A549 (cell line): ENCODE measurements at regions of chr10 and their contacts with region 1.

Region 1: DNA sequence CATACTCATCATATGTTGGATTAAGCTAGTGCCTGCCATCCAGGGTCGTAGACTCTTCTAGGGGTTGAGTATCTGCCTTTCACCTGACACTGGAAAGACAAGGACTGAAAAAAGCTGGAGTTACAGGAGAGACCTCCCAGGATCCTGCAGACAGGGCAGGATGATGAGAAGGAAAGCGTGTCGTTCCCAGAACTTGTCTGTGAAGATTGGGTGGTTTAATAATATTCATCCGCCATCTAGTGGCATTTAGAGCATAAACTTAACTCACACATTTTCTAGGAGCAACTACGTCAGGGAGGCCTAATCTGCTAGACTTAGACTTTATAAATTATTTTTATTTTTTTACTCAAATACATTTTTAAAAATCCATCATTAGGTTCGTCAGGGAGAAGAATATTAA is 59.6 kb downstream of the ADRB1 start:
- DNase-seq: peak; percentile 74
- ATAC-seq: peak; percentile 94 to 95
- H3K4me3 ChIP-seq: no peak overlapping the region
- H3K27ac ChIP-seq: no peak overlapping the region; a peak in 1 of 6 replicates
- H3K4me1 ChIP-seq: 0 out of 3 replicates have a peak, but pooled peaks cover 3% of the 10 kb centered on the region
- CTCF ChIP-seq: peak; percentile 87
- EP300 ChIP-seq: no peak
- POLR2A ChIP-seq: no peak
- RAD21 ChIP-seq: peak; percentile 91 to 94

Region 2: GRCh38 chr10:113121153-113121552 is 982.1 kb before region 1 on chr10:
- CTCF ChIA-PET with region 1: no interaction called
- POLR2A ChIA-PET with region 1: no interaction called
- DNase-seq: no peak
- ATAC-seq: no peak
- H3K4me3 ChIP-seq: no peak overlapping the region
- H3K27ac ChIP-seq: no peak overlapping the region
- H3K4me1 ChIP-seq: peaks cover 18% of the 10 kb centered on the region
- CTCF ChIP-seq: no peak
- EP300 ChIP-seq: no peak
- POLR2A ChIP-seq: no peak
- RAD21 ChIP-seq: no peak

Region 3: GRCh38 chr10:113704637-113705343 is 398.5 kb before region 1 on chr10:
- CTCF ChIA-PET with region 1: interaction called, 59 read pairs
- POLR2A ChIA-PET with region 1: no interaction called
- DNase-seq: peak; percentile 20 to 49
- ATAC-seq: peak; percentile 61 to 89; a peak in 4 of 6 replicates
- H3K4me3 ChIP-seq: no peak overlapping the region
- H3K27ac ChIP-seq: no peak overlapping the region
- H3K4me1 ChIP-seq: peaks cover 25% of the 10 kb centered on the region
- CTCF ChIP-seq: peak; percentile 87
- EP300 ChIP-seq: no peak
- POLR2A ChIP-seq: no peak
- RAD21 ChIP-seq: peak; percentile 80 to 82

Region 4: GRCh38 chr10:113788604-113789083 is 314.6 kb before region 1 on chr10:
- CTCF ChIA-PET with region 1: interaction called, 11 read pairs
- POLR2A ChIA-PET with region 1: no interaction called
- DNase-seq: peak; percentile 44 to 80
- ATAC-seq: peak; percentile 63 to 85
- H3K4me3 ChIP-seq: no peak overlapping the region
- H3K27ac ChIP-seq: peak overlapping the region; percentile 83 to 89
- H3K4me1 ChIP-seq: peaks cover 22% of the 10 kb centered on the region
- CTCF ChIP-seq: no peak
- EP300 ChIP-seq: peak in 1 of 2 experiments; percentile 35; a peak in 1 of 5 replicates
- POLR2A ChIP-seq: no peak
- RAD21 ChIP-seq: no peak

Region 5: DNA sequence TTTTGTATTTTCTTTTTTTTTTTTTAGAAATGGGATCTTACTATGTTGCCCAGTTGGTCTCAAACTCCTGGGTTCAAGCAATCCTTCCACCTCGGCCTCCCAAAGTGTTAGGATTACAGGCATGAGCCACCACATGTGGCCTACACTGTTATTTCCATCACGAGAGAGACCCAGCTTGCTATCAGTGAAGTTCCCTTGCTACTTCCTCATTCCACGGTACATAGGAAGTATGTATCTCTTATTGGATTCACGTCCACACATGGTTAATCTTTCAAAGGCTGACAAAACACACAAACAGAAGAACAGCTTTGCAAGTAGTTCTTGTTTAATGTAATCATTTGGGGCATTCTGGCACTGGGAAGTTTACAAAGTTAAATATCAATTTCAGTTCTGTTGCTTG is 300.3 kb before region 1 on chr10:
- CTCF ChIA-PET with region 1: interaction called, 195 read pairs
- POLR2A ChIA-PET with region 1: no interaction called
- DNase-seq: no peak
- ATAC-seq: no peak
- H3K4me3 ChIP-seq: no peak overlapping the region
- H3K27ac ChIP-seq: no peak overlapping the region
- H3K4me1 ChIP-seq: no peaks in the 10 kb centered on the region
- CTCF ChIP-seq: no peak
- EP300 ChIP-seq: no peak
- POLR2A ChIP-seq: no peak
- RAD21 ChIP-seq: no peak

Region 6: GRCh38 chr10:113808168-113808567 is 295.1 kb before region 1 on chr10:
- CTCF ChIA-PET with region 1: interaction called, 195 read pairs
- POLR2A ChIA-PET with region 1: no interaction called
- DNase-seq: no peak
- ATAC-seq: no peak
- H3K4me3 ChIP-seq: no peak overlapping the region
- H3K27ac ChIP-seq: no peak overlapping the region
- H3K4me1 ChIP-seq: no peaks in the 10 kb centered on the region
- CTCF ChIP-seq: no peak
- EP300 ChIP-seq: no peak
- POLR2A ChIP-seq: no peak
- RAD21 ChIP-seq: no peak

Region 7: GRCh38 chr10:113921561-113922289 is 181.6 kb before region 1 on chr10:
- CTCF ChIA-PET with region 1: no interaction called
- POLR2A ChIA-PET with region 1: no interaction called
- DNase-seq: no peak
- ATAC-seq: no peak
- H3K4me3 ChIP-seq: no peak overlapping the region
- H3K27ac ChIP-seq: no peak overlapping the region
- H3K4me1 ChIP-seq: no peaks in the 10 kb centered on the region
- CTCF ChIP-seq: no peak
- EP300 ChIP-seq: no peak
- POLR2A ChIP-seq: no peak
- RAD21 ChIP-seq: no peak

Region 8: GRCh38 chr10:114087655-114088054 is 15.6 kb before region 1 on chr10:
- CTCF ChIA-PET with region 1: interaction called, 13 read pairs
- POLR2A ChIA-PET with region 1: no interaction called
- DNase-seq: no peak
- ATAC-seq: peak; percentile 55 to 57; a peak in 3 of 6 replicates
- H3K4me3 ChIP-seq: no peak overlapping the region
- H3K27ac ChIP-seq: no peak overlapping the region
- H3K4me1 ChIP-seq: peaks cover 4% of the 10 kb centered on the region
- CTCF ChIP-seq: no peak
- EP300 ChIP-seq: no peak
- POLR2A ChIP-seq: no peak
- RAD21 ChIP-seq: no peak

Region 9: DNA sequence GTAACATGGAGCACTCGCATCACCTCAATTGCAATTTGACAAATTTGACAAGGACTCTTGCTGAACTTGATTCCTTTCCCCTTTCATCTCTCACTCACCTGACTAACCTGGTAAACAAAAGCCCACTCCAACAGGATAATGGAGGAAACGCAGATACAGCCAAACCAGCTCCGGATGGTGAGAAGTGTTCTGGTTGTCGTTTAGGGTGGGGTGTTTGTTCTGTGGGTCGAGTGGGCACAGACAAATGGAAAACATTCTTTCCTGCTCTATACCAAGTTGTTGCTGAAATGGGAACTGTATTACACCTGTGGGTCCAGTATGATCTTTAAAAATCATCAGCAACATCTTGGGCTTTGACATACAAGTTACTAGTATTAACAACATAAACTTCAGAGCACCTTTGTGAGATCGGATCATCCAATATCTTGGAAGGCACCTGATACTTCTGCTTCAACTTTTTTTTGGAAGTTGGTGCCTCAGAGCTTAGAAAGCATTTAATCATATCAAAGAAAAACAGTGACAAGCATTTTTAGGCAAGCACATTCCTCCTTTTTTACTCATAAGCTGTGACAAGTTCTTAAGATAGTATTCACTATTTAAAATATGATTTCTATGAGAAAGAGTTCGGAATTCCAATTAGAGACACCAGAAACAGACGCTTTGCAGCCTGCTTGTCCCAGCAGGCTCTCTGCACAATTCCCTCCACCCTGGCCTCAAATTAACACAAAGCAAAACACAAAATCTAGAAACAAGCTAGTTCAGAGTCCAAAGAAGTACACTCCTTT is 12.6 kb after region 1 on chr10:
- CTCF ChIA-PET with region 1: interaction called, 35 read pairs
- POLR2A ChIA-PET with region 1: no interaction called
- DNase-seq: no peak
- ATAC-seq: no peak
- H3K4me3 ChIP-seq: no peak overlapping the region
- H3K27ac ChIP-seq: no peak overlapping the region
- H3K4me1 ChIP-seq: no peaks in the 10 kb centered on the region
- CTCF ChIP-seq: no peak
- EP300 ChIP-seq: no peak
- POLR2A ChIP-seq: no peak
- RAD21 ChIP-seq: no peak

Region 10: DNA sequence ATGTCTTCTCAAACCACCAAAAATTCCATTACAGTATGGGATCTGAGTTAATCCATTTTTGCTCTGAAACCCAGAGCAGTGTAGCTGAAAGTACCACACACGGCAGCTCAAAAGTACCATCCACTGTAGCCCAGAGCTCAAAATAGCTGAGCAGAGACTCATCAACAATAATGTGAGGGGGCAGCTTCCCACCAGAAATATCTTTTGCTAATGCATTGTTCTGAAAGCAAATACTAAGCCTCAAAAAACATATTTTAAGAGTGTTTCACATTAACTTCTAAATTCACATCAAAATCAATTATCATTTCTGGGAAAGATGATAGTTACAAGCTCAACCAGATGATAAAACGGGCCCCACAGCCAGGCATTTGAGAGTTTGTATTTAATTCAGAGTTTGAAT is 481.1 kb after region 1 on chr10:
- CTCF ChIA-PET with region 1: no interaction called
- POLR2A ChIA-PET with region 1: no interaction called
- DNase-seq: no peak
- ATAC-seq: no peak
- H3K4me3 ChIP-seq: no peak overlapping the region
- H3K27ac ChIP-seq: no peak overlapping the region
- H3K4me1 ChIP-seq: no peaks in the 10 kb centered on the region
- CTCF ChIP-seq: no peak
- EP300 ChIP-seq: no peak
- POLR2A ChIP-seq: no peak
- RAD21 ChIP-seq: no peak